ENCODE measurements at regions of chr7 and their contacts with region 1.

Region 1: GRCh38 chr7:93890464-93891068 is at the start of gene TFPI2:
- DNase-seq: peak; percentile 83
- ATAC-seq: peak; percentile 72
- H3K4me3 ChIP-seq: peak within 1 kb of the TSS; percentile 69
- H3K27ac ChIP-seq: peak within 1 kb of the TSS; percentile 71
- H3K4me1 ChIP-seq: peaks cover 2% of the 10 kb centered on the region; the same call in 1 of the 2 replicates
- H3K27me3 ChIP-seq: no peaks in the 10 kb centered on the region
- CTCF ChIP-seq: peak; percentile 18; the same call in 1 of the 2 replicates
- POLR2A ChIP-seq: peak; percentile 92
- RAD21 ChIP-seq: peak; percentile 33; the same call in 1 of the 2 replicates
- total RNA-seq, gene TFPI2: 48.9 and 53.6 TPM in 2 replicates

Region 2: GRCh38 chr7:93043385-93043985 is 847.1 kb before region 1 on chr7:
- CTCF ChIA-PET with region 1: no interaction called
- POLR2A ChIA-PET with region 1: no interaction called
- dilution Hi-C with region 1: no loop called
- in situ Hi-C with region 1: no loop called
- intact Hi-C with region 1: no loop called
- DNase-seq: peak; percentile 96
- ATAC-seq: peak; percentile 70
- H3K4me3 ChIP-seq: peak overlapping the region; percentile 1; the same call in 1 of the 2 replicates
- H3K27ac ChIP-seq: peak overlapping the region; percentile 81
- H3K4me1 ChIP-seq: peaks cover 15% of the 10 kb centered on the region
- H3K27me3 ChIP-seq: no peaks in the 10 kb centered on the region
- CTCF ChIP-seq: no peak
- POLR2A ChIP-seq: no peak
- RAD21 ChIP-seq: no peak; the same call in 1 of the 2 replicates

Region 3: GRCh38 chr7:94004024-94004951 is 113.7 kb after region 1 on chr7 and contains the start of gene BET1:
- CTCF ChIA-PET with region 1: no interaction called
- POLR2A ChIA-PET with region 1: no interaction called
- dilution Hi-C with region 1: no loop called
- in situ Hi-C with region 1: no loop called
- intact Hi-C with region 1: loop called (anchors 5 kb)
- DNase-seq: peak; percentile 97
- ATAC-seq: peak; percentile 98
- H3K4me3 ChIP-seq: peak within 1 kb of the TSS; percentile 73
- H3K27ac ChIP-seq: peak within 1 kb of the TSS; percentile 84
- H3K4me1 ChIP-seq: peaks cover 2% of the 10 kb centered on the region; the same call in 1 of the 2 replicates
- H3K27me3 ChIP-seq: no peaks in the 10 kb centered on the region
- CTCF ChIP-seq: no peak
- POLR2A ChIP-seq: peak; percentile 84
- RAD21 ChIP-seq: no peak
- total RNA-seq, gene BET1: 9.9 and 36.4 TPM in 2 replicates

Region 4: GRCh38 chr7:94170836-94171235 is 280.3 kb after region 1 on chr7:
- CTCF ChIA-PET with region 1: no interaction called
- POLR2A ChIA-PET with region 1: no interaction called
- dilution Hi-C with region 1: no loop called
- in situ Hi-C with region 1: no loop called
- intact Hi-C with region 1: no loop called
- DNase-seq: no peak
- ATAC-seq: no peak
- H3K4me3 ChIP-seq: no peak overlapping the region
- H3K27ac ChIP-seq: no peak overlapping the region
- H3K4me1 ChIP-seq: no peaks in the 10 kb centered on the region; the same call in 1 of the 2 replicates
- H3K27me3 ChIP-seq: no peaks in the 10 kb centered on the region
- CTCF ChIP-seq: no peak
- POLR2A ChIP-seq: no peak
- RAD21 ChIP-seq: no peak

Region 5: GRCh38 chr7:94395141-94396036 is 504.8 kb after region 1 on chr7:
- CTCF ChIA-PET with region 1: no interaction called
- POLR2A ChIA-PET with region 1: no interaction called
- dilution Hi-C with region 1: no loop called
- in situ Hi-C with region 1: no loop called
- intact Hi-C with region 1: no loop called
- DNase-seq: peak; percentile 90
- ATAC-seq: 0 out of 2 replicates have a peak, but pooled peaks have one; percentile 0
- H3K4me3 ChIP-seq: peak overlapping the region; percentile 81
- H3K27ac ChIP-seq: peak overlapping the region; percentile 94
- H3K4me1 ChIP-seq: peaks cover 15% of the 10 kb centered on the region
- H3K27me3 ChIP-seq: no peaks in the 10 kb centered on the region
- CTCF ChIP-seq: peak; percentile 81
- POLR2A ChIP-seq: no peak
- RAD21 ChIP-seq: peak; percentile 91

Measured in IMR-90 (cell line).